Ascending aorta (tissue), 2 donors: ENCODE measurements at regions of chr12 and their contacts with region 1.

Region 1: GRCh38 chr12:19507823-19508222 is 68.5 kb downstream of the AEBP2 start:
- DNase-seq: no peak
- H3K4me3 ChIP-seq: no peak overlapping the region
- H3K27ac ChIP-seq: peak overlapping the region in 1 of 2 donors; percentile 61
- H3K4me1 ChIP-seq: peaks cover 5 to 24% of the 10 kb centered on the region in 2 donors
- H3K27me3 ChIP-seq: no peaks in the 10 kb centered on the region
- CTCF ChIP-seq: peak in 2 of 3 experiments; percentile 17 to 48

Region 2: GRCh38 chr12:19572920-19573558 is 65.2 kb after region 1 on chr12:
- intact Hi-C with region 1: no loop called
- DNase-seq: no peak
- H3K4me3 ChIP-seq: no peak overlapping the region
- H3K27ac ChIP-seq: no peak overlapping the region
- H3K4me1 ChIP-seq: no peaks in the 10 kb centered on the region
- H3K27me3 ChIP-seq: no peaks in the 10 kb centered on the region
- CTCF ChIP-seq: peak in 1 of 3 experiments; percentile 17

Region 3: GRCh38 chr12:19683178-19683927 is 175.5 kb after region 1 on chr12:
- intact Hi-C with region 1: no loop called
- DNase-seq: no peak
- H3K4me3 ChIP-seq: no peak overlapping the region
- H3K27ac ChIP-seq: peak overlapping the region; percentile 52 to 68
- H3K4me1 ChIP-seq: peaks cover 3 to 5% of the 10 kb centered on the region in 2 donors
- H3K27me3 ChIP-seq: no peaks in the 10 kb centered on the region
- CTCF ChIP-seq: no peak

Region 4: DNA sequence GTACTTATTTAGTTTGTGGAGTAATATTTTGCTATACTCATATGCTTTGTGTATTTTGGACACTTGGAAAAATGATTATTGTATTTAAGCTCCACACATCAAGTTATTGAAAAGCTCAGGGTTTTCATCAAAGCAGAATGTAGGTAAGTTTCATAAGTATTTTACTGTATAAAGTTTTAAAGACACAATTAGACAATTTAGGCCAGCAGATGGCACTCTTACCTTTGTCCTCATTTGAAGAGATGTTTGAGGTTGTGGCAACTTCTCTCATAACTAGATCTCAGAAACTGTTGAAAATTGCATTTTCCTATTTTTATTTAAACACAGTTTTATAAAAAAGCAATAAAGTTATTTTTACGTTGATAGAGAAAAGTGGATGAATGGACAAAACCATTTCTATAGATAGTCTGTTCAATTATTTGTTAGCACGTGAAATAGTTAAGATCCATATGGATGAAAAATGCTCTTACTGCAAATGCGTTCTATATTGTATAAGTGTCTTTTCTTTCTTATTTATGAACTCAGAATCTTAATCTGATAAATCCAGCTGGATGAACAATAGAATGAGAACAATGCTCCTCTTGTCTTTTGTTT is 231.5 kb after region 1 on chr12:
- intact Hi-C with region 1: loop called (anchors 5 kb)
- DNase-seq: no peak
- H3K4me3 ChIP-seq: no peak overlapping the region
- H3K27ac ChIP-seq: peak overlapping the region in 1 of 2 donors; percentile 25
- H3K4me1 ChIP-seq: peaks cover 3 to 22% of the 10 kb centered on the region in 2 donors
- H3K27me3 ChIP-seq: no peaks in the 10 kb centered on the region
- CTCF ChIP-seq: peak; percentile 51 to 65 (median 57)